ENCODE measurements at regions of chr4 and their contacts with region 1.

Region 1: DNA sequence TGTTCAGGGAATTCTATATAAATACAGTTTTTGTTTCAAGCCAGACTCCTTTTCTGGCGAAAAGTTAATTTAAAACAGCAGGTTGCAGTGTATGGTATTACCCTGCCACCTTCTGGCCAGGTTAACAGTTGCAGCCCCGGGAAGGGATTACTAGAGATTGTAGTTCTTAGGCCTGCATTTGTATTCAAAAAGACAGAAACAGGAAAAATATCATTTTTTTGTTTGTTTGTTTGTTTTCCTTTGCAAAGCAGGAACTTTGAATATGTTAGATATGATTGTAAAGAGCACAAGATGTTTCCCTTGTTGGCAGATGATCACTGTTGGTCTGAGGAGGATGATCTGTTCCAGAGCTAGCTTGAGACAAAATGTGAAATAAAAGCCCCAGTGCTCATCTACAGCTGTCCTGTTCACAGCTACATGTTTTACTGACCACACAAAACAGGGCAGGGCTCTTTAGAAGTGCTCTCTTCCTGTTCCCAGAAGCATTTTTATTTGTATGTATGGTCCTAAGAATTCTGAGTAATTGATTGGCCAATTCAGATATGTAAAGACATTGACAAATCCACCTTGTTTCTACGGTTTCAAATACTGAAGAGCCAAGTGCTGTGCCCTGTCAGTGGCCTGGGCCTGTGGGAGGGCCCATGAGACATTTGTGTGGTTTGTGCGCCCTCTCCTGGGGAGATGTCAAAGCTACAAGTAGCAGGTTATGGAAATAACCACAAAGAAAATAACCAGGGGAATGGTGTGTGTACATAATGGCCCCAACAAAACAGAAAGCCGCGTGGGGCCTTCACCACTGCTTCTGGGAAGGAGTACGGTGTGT is 57.9 kb downstream of the CLDN22 start:
- DNase-seq: peak; percentile 92
- ATAC-seq: peak; percentile 96

Region 2: GRCh38 chr4:182246401-182247205 is 1015.6 kb before region 1 on chr4:
- intact Hi-C with region 1: no loop called
- DNase-seq: no peak
- ATAC-seq: no peak

Region 3: GRCh38 chr4:182938205-182938645 is 323.9 kb before region 1 on chr4:
- intact Hi-C with region 1: loop called (anchors 10 kb)
- DNase-seq: peak; percentile 84
- ATAC-seq: peak; percentile 97

Region 4: DNA sequence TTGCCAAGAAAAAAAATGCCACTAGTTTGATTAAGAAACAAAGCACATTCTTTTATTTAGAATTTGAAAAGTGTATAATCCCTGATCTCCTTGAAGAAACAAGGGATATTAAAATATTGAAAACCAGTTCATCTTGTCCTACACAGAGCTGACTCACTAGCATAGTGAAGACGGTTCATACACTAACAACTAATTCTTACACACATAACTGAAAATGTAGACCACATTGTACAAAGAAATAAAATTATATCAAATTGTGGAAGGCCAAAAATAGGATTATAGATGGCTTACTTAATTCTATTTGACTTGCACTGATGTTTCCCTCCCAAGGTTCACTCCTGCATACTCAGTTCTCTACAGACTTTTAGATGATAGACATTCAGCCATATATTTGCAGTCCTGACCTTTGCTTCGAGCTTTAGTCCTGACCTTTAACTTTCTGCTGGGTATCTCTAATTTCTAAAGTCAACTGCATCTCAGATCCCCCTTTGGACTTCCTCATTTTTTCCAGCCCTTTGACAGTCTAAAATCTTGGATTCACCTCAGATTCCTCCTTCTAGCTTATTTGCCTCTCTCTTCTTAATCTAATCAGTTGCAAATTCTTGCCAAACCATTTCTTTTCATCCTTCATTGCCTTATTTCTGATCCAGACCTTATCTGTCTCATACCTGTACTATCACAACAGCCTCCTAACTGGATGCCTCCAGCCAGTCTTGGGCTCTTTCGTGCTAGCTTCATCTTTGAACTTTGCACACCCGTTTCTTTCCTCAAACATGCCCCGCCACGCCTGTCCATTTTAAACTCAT is 167.6 kb before region 1 on chr4:
- intact Hi-C with region 1: loop called (anchors 5 kb)
- DNase-seq: no peak
- ATAC-seq: no peak

Region 5: DNA sequence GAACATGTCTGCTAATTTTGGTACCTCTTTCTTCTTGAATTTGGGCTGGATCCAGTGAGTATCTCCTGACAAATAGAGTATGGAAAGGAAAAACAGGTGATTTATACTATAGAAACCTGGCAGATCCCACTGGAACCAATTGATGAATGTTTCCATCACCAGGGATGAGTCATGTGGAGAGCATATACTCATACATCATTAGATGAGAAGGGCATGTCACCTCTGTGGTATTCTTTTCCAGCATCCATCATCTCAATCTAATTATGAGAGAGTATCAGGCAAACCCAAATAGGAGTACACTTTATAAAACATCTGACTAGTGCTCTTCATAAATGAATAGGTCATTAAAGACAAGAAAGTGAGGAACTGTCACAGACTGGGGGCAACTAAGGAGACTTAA is 32.8 kb before region 1 on chr4:
- intact Hi-C with region 1: no loop called
- DNase-seq: no peak
- ATAC-seq: no peak

Measured in sciatic nerve (tissue), 2 donors.